Naive thymus-derived CD4-positive, alpha-beta T cell (primary cell): ENCODE measurements at regions of chr7 and their contacts with region 1.

Region 1: GRCh38 chr7:155598810-155599210 is 45.7 kb upstream of the RBM33 start:
- DNase-seq: peak; percentile 52 to 86 (median 75)
- ATAC-seq: peak; percentile 90
- H3K4me3 ChIP-seq: no peak overlapping the region
- H3K4me3 Mint-ChIP-seq: peak overlapping the region in 2 of 10 donors; percentile 21 to 28
- H3K27ac ChIP-seq: no peak overlapping the region
- H3K27ac Mint-ChIP-seq: no peak overlapping the region
- H3K4me1 ChIP-seq: no peaks in the 10 kb centered on the region
- H3K4me1 Mint-ChIP-seq: peaks cover 0 to 9% (median 5%) of the 10 kb centered on the region in 7 donors
- H3K27me3 ChIP-seq: no peaks in the 10 kb centered on the region
- H3K27me3 Mint-ChIP-seq: peaks cover 26 to 38% (median 32%) of the 10 kb centered on the region in 5 donors

Region 2: GRCh38 chr7:155685070-155685790 is 86.4 kb after region 1 on chr7:
- CTCF ChIA-PET with region 1: no interaction called
- POLR2A ChIA-PET with region 1: no interaction called
- intact Hi-C with region 1: loop called in 1 of 2 experiments (anchors 10 kb)
- DNase-seq: peak in 4 of 9 donors; percentile 4 to 16 (median 10)
- ATAC-seq: peak; percentile 48
- H3K4me3 ChIP-seq: no peak overlapping the region
- H3K4me3 Mint-ChIP-seq: peak overlapping the region; percentile 8 to 68 (median 45)
- H3K27ac ChIP-seq: peak overlapping the region; percentile 1
- H3K27ac Mint-ChIP-seq: peak overlapping the region; percentile 1 to 74 (median 19)
- H3K4me1 ChIP-seq: no peaks in the 10 kb centered on the region
- H3K4me1 Mint-ChIP-seq: peaks cover 32 to 83% (median 78%) of the 10 kb centered on the region in 7 donors
- H3K27me3 ChIP-seq: no peaks in the 10 kb centered on the region
- H3K27me3 Mint-ChIP-seq: no peaks in the 10 kb centered on the region

Region 3: GRCh38 chr7:155738652-155739537 is 140.1 kb after region 1 on chr7:
- CTCF ChIA-PET with region 1: interaction called, 8 read pairs
- POLR2A ChIA-PET with region 1: interaction called, 3 read pairs
- intact Hi-C with region 1: loop called (anchors 1 kb)
- DNase-seq: peak; percentile 27 to 85 (median 77)
- ATAC-seq: peak; percentile 93
- H3K4me3 ChIP-seq: no peak overlapping the region
- H3K4me3 Mint-ChIP-seq: peak overlapping the region in 9 of 10 donors; percentile 15 to 71 (median 62)
- H3K27ac ChIP-seq: peak overlapping the region; percentile 30
- H3K27ac Mint-ChIP-seq: peak overlapping the region; percentile 24 to 97 (median 87)
- H3K4me1 ChIP-seq: peaks cover 0 to 12% of the 10 kb centered on the region in 2 donors
- H3K4me1 Mint-ChIP-seq: peaks cover 17 to 71% (median 49%) of the 10 kb centered on the region in 7 donors
- H3K27me3 ChIP-seq: no peaks in the 10 kb centered on the region
- H3K27me3 Mint-ChIP-seq: no peaks in the 10 kb centered on the region

Region 4: DNA sequence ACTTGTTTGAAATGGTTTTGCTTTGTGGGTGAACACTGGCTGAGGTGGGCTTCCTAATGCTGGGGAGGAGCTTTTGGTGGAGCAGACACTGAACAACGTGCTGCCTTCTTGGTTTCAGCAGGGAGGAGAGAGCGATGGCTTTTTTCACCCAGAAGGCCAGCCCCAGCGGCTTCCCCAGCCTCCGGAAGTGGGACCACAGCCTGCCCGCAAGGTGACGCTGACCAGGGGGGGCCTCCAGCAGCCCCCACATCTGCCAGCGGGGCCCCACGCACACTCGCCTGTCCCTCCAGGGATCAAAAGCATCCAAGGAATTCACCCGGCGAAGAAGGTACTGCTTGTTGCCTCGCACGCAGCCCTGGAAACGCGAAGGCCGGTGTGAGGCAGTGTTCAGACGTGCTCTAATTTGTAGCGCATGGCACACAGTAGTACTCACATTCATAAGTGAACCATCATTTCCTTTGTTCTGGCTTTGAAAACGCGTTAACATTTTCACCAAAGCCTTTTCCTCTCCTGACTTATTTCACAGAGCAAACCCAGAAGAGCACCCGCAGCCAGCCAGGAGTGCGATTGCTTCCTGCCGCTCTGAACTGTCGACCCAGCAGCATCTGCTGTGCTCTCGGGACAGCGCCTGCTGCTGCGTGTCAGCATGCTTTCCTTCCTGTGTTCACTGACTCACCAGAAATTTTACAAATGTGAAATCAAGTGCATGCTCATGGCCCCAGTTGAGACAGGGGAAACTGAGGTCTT is 165.1 kb after region 1 on chr7:
- CTCF ChIA-PET with region 1: interaction called, 78 read pairs
- POLR2A ChIA-PET with region 1: no interaction called
- intact Hi-C with region 1: loop called (anchors 1 kb)
- DNase-seq: peak in 8 of 9 donors; percentile 48 to 73 (median 60)
- ATAC-seq: peak; percentile 80
- H3K4me3 ChIP-seq: peak overlapping the region; percentile 12
- H3K4me3 Mint-ChIP-seq: peak overlapping the region; percentile 64 to 91 (median 80)
- H3K27ac ChIP-seq: peak overlapping the region; percentile 67
- H3K27ac Mint-ChIP-seq: peak overlapping the region; percentile 73 to 98 (median 91)
- H3K4me1 ChIP-seq: peaks cover 24 to 31% of the 10 kb centered on the region in 2 donors
- H3K4me1 Mint-ChIP-seq: peaks cover 39 to 67% (median 61%) of the 10 kb centered on the region in 7 donors
- H3K27me3 ChIP-seq: no peaks in the 10 kb centered on the region
- H3K27me3 Mint-ChIP-seq: no peaks in the 10 kb centered on the region

Region 5: GRCh38 chr7:155769701-155770100 is 170.9 kb after region 1 on chr7:
- CTCF ChIA-PET with region 1: interaction called, 78 read pairs
- POLR2A ChIA-PET with region 1: no interaction called
- intact Hi-C with region 1: loop called (anchors 1 kb)
- DNase-seq: no peak
- ATAC-seq: no peak
- H3K4me3 ChIP-seq: no peak overlapping the region
- H3K4me3 Mint-ChIP-seq: no peak overlapping the region
- H3K27ac ChIP-seq: no peak overlapping the region
- H3K27ac Mint-ChIP-seq: peak overlapping the region in 1 of 9 donors; percentile 52
- H3K4me1 ChIP-seq: peaks cover 4 to 6% of the 10 kb centered on the region in 2 donors
- H3K4me1 Mint-ChIP-seq: peaks cover 4 to 27% (median 11%) of the 10 kb centered on the region in 7 donors
- H3K27me3 ChIP-seq: no peaks in the 10 kb centered on the region
- H3K27me3 Mint-ChIP-seq: no peaks in the 10 kb centered on the region